Tibial artery (tissue), 4 donors: ENCODE measurements at regions of chr17 and their contacts with region 1.

Region 1: DNA sequence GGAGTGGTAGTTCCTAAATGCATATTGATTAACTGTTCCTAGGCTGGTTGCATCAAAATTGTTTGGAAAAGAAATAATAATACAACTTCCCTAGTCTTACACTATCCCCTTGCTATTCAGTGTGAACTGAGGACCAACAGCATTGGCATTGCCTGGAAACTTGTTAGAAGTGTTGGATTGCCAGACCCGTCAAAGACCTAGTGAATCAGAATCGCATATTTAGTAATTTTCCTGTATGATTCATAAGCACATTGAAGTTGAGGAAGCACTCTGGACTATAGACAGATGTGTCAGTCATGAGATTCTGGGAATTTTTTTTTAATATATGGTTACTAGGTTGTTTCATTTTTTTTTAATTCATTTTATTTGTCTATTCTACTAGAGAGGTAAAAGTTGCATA is 34.7 kb upstream of the KCNJ16 start:
- DNase-seq: no peak
- H3K4me3 ChIP-seq: no peak overlapping the region
- H3K27ac ChIP-seq: no peak overlapping the region
- H3K4me1 ChIP-seq: no peaks in the 10 kb centered on the region
- H3K27me3 ChIP-seq: no peaks in the 10 kb centered on the region
- CTCF ChIP-seq: no peak

Region 2: GRCh38 chr17:69677130-69677529 is 363.2 kb before region 1 on chr17:
- intact Hi-C with region 1: loop called (anchors 5 kb)
- DNase-seq: no peak
- H3K4me3 ChIP-seq: no peak overlapping the region
- H3K27ac ChIP-seq: no peak overlapping the region
- H3K4me1 ChIP-seq: no peaks in the 10 kb centered on the region
- H3K27me3 ChIP-seq: no peaks in the 10 kb centered on the region
- CTCF ChIP-seq: no peak

Region 3: DNA sequence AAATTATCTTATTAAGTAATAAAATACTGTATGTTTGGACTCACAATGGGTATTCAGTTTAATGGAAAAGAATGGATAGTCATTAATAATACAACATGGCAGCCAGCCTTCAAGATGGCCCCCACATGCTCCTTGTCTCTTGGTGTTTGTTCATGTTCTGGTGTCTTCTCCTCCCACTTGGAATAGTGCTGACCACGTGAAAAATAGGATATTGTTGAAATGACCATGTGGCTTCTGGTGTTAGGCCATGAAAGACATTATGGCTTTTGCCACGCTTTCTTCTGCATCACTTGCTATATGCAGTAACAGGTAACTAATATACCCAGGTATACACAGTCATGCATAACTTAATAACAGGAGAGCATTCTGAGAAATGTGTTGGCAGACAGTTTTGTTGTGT is 470.0 kb after region 1 on chr17:
- intact Hi-C with region 1: no loop called
- DNase-seq: no peak
- H3K4me3 ChIP-seq: no peak overlapping the region
- H3K27ac ChIP-seq: no peak overlapping the region
- H3K4me1 ChIP-seq: no peaks in the 10 kb centered on the region
- H3K27me3 ChIP-seq: no peaks in the 10 kb centered on the region
- CTCF ChIP-seq: no peak